Endothelial cell of umbilical vein (primary cell): ENCODE measurements at regions of chr16 and their contacts with region 1.

Region 1: GRCh38 chr16:19907161-19907992 is 22.7 kb upstream of the GPRC5B start:
- DNase-seq: peak; percentile 73
- H3K4me3 ChIP-seq: no peak overlapping the region
- H3K27ac ChIP-seq: no peak overlapping the region
- H3K4me1 ChIP-seq: no peaks in the 10 kb centered on the region
- H3K27me3 ChIP-seq: no peaks in the 10 kb centered on the region
- CTCF ChIP-seq: peak; percentile 97 to 100
- POLR2A ChIP-seq: no peak

Region 2: DNA sequence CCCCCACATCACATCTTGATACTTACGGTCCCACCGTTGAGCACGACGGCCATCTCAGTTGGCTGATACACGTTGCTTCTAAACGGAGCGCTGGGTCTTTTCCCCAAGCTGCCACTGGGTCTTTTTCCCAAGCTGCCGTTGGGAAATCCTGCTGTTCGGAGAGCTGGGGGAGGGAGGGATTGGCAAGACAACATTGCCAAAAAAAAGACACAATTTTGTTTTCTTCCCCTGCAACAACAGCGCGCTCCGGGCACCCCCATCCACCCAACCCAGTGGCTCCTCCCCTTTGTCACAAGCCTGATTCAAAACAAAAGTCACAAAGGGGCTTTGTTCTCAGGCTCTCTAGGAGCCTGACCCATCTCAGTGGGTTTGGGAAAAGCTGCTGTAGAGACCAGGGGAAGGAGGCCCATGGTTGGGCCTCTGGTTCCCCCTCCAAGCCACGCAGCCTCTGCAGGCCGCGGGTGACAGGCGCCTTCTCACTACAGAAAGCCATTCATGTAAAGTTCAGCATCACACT is 45.5 kb before region 1 on chr16:
- CTCF ChIA-PET with region 1: no interaction called
- POLR2A ChIA-PET with region 1: no interaction called
- dilution Hi-C with region 1: no loop called
- intact Hi-C with region 1: no loop called
- DNase-seq: no peak
- H3K4me3 ChIP-seq: no peak overlapping the region
- H3K27ac ChIP-seq: no peak overlapping the region
- H3K4me1 ChIP-seq: no peaks in the 10 kb centered on the region
- H3K27me3 ChIP-seq: no peaks in the 10 kb centered on the region
- CTCF ChIP-seq: no peak
- POLR2A ChIP-seq: no peak

Region 3: GRCh38 chr16:19919142-19919541 is 11.8 kb after region 1 on chr16:
- CTCF ChIA-PET with region 1: interaction called, 40 read pairs
- POLR2A ChIA-PET with region 1: no interaction called
- dilution Hi-C with region 1: no loop called
- intact Hi-C with region 1: no loop called
- DNase-seq: no peak
- H3K4me3 ChIP-seq: no peak overlapping the region
- H3K27ac ChIP-seq: no peak overlapping the region
- H3K4me1 ChIP-seq: no peaks in the 10 kb centered on the region
- H3K27me3 ChIP-seq: no peaks in the 10 kb centered on the region
- CTCF ChIP-seq: no peak
- POLR2A ChIP-seq: no peak

Region 4: DNA sequence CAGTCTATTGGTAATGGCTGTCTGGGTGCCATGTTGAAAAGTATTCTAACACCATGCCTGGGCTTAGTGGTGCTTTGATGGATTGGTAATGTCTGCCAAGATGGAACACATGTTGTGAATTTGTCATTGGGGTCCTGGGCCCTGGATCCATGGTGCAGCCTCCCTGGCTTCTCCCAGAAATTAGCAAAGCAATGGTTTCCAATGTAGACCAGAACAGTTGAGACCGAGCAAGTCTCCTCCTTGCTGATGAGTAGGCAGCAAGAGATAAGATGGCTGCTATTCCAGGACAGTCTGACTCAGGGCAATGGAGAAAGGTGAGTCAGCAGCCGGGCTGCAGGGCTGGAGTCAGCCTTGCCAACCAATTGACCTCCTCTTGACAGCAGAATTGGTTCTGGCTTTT is 135.5 kb after region 1 on chr16:
- CTCF ChIA-PET with region 1: no interaction called
- POLR2A ChIA-PET with region 1: no interaction called
- dilution Hi-C with region 1: no loop called
- intact Hi-C with region 1: no loop called
- DNase-seq: no peak
- H3K4me3 ChIP-seq: no peak overlapping the region
- H3K27ac ChIP-seq: no peak overlapping the region
- H3K4me1 ChIP-seq: no peaks in the 10 kb centered on the region
- H3K27me3 ChIP-seq: no peaks in the 10 kb centered on the region
- CTCF ChIP-seq: no peak
- POLR2A ChIP-seq: no peak

Region 5: GRCh38 chr16:20372701-20373100 is 465.3 kb after region 1 on chr16:
- CTCF ChIA-PET with region 1: interaction called, 12 read pairs
- POLR2A ChIA-PET with region 1: no interaction called
- dilution Hi-C with region 1: no loop called
- intact Hi-C with region 1: no loop called
- DNase-seq: no peak
- H3K4me3 ChIP-seq: no peak overlapping the region
- H3K27ac ChIP-seq: no peak overlapping the region
- H3K4me1 ChIP-seq: no peaks in the 10 kb centered on the region
- H3K27me3 ChIP-seq: no peaks in the 10 kb centered on the region
- CTCF ChIP-seq: no peak
- POLR2A ChIP-seq: no peak

Region 6: GRCh38 chr16:20383106-20384029 is 476.0 kb after region 1 on chr16:
- CTCF ChIA-PET with region 1: interaction called, 438 read pairs
- POLR2A ChIA-PET with region 1: no interaction called
- dilution Hi-C with region 1: no loop called
- intact Hi-C with region 1: loop called (anchors 1 kb)
- DNase-seq: peak; percentile 73
- H3K4me3 ChIP-seq: no peak overlapping the region
- H3K27ac ChIP-seq: no peak overlapping the region
- H3K4me1 ChIP-seq: no peaks in the 10 kb centered on the region
- H3K27me3 ChIP-seq: no peaks in the 10 kb centered on the region
- CTCF ChIP-seq: peak; percentile 60 to 78
- POLR2A ChIP-seq: no peak

Region 7: GRCh38 chr16:20707461-20707860 is 800.1 kb after region 1 on chr16:
- CTCF ChIA-PET with region 1: interaction called, 3 read pairs
- POLR2A ChIA-PET with region 1: no interaction called
- dilution Hi-C with region 1: no loop called
- intact Hi-C with region 1: loop called (anchors 5 kb)
- DNase-seq: no peak
- H3K4me3 ChIP-seq: no peak overlapping the region
- H3K27ac ChIP-seq: no peak overlapping the region
- H3K4me1 ChIP-seq: no peaks in the 10 kb centered on the region
- H3K27me3 ChIP-seq: no peaks in the 10 kb centered on the region
- CTCF ChIP-seq: no peak
- POLR2A ChIP-seq: no peak